Panc1 (cell line): ENCODE measurements at regions of chr21 and their contacts with region 1.

Region 1: GRCh38 chr21:32403201-32403777 is 9.2 kb upstream of the EVA1C start:
- DNase-seq: no peak
- ATAC-seq: peak; percentile 89
- H3K4me3 ChIP-seq: no peak overlapping the region
- H3K27ac ChIP-seq: no peak overlapping the region
- H3K4me1 ChIP-seq: no peaks in the 10 kb centered on the region
- H3K27me3 ChIP-seq: no peaks in the 10 kb centered on the region
- CTCF ChIP-seq: peak; percentile 76

Region 2: GRCh38 chr21:32312976-32313375 is 90.3 kb before region 1 on chr21:
- CTCF ChIA-PET with region 1: interaction called, 12 read pairs
- POLR2A ChIA-PET with region 1: no interaction called
- in situ Hi-C with region 1: no loop called
- intact Hi-C with region 1: no loop called
- DNase-seq: no peak
- ATAC-seq: no peak
- H3K4me3 ChIP-seq: no peak overlapping the region
- H3K27ac ChIP-seq: no peak overlapping the region
- H3K4me1 ChIP-seq: no peaks in the 10 kb centered on the region
- H3K27me3 ChIP-seq: no peaks in the 10 kb centered on the region
- CTCF ChIP-seq: no peak

Region 3: GRCh38 chr21:32477424-32477745 is 74.1 kb after region 1 on chr21:
- CTCF ChIA-PET with region 1: no interaction called
- POLR2A ChIA-PET with region 1: interaction called, 14 read pairs
- in situ Hi-C with region 1: no loop called
- intact Hi-C with region 1: no loop called
- DNase-seq: no peak
- ATAC-seq: no peak
- H3K4me3 ChIP-seq: no peak overlapping the region
- H3K27ac ChIP-seq: no peak overlapping the region
- H3K4me1 ChIP-seq: peaks cover 22% of the 10 kb centered on the region
- H3K27me3 ChIP-seq: no peaks in the 10 kb centered on the region
- CTCF ChIP-seq: no peak

Region 4: DNA sequence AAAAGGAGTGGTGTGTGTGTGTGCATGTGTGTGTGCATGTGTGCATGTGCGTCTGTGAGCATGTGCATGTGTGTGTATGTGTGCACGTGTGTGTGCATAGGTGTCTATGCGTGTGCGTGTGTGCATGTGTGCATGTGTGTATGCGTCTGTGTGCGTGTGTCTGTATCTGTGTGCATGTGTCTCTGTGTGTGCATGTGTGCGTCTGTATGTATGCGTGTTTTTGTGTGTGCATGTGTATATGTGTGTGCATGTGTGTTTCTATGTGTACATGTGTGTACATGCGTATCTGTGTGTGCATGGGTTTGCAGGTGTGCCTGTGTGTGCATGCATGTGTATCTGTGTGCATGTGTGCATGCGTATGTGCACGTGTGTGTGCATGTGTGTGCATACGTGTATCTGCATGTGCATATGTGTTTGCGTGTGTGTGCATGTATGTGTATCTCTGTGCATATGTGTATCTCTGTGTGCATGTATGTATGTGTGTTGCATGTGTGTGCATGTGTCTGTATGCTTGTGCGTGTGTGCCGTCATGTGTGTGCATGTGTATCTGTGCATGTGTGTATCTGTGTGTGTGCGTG is 104.1 kb after region 1 on chr21:
- CTCF ChIA-PET with region 1: no interaction called
- POLR2A ChIA-PET with region 1: no interaction called
- in situ Hi-C with region 1: no loop called
- intact Hi-C with region 1: no loop called
- DNase-seq: no peak
- ATAC-seq: no peak
- H3K4me3 ChIP-seq: no peak overlapping the region
- H3K27ac ChIP-seq: no peak overlapping the region
- H3K4me1 ChIP-seq: no peaks in the 10 kb centered on the region
- H3K27me3 ChIP-seq: no peaks in the 10 kb centered on the region
- CTCF ChIP-seq: no peak

Region 5: DNA sequence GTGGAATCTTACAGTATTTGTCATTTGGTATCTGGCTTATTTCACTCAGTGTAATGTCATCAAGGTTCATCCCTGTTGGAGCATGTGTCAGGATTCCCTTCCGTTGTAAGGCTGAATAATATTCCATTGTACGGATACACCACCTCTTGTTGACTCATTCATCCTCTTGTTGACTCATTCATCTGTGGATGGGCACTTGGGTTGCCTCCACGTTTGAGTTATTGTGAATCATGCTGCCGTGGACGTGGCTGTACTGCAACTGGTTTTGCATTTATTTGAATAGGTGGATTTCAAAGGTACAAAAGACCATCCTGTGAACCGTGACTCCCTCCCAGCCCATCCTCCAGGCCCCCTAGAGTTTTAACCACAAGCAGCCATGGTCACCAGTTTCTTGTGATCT is 193.9 kb after region 1 on chr21:
- CTCF ChIA-PET with region 1: interaction called, 13 read pairs
- POLR2A ChIA-PET with region 1: interaction called, 3 read pairs
- in situ Hi-C with region 1: no loop called
- intact Hi-C with region 1: no loop called
- DNase-seq: peak; percentile 74
- ATAC-seq: peak; percentile 75
- H3K4me3 ChIP-seq: no peak overlapping the region
- H3K27ac ChIP-seq: no peak overlapping the region
- H3K4me1 ChIP-seq: peaks cover 3% of the 10 kb centered on the region; the same call in 1 of the 2 replicates
- H3K27me3 ChIP-seq: no peaks in the 10 kb centered on the region
- CTCF ChIP-seq: no peak